ENCODE measurements at regions of chr3 and their contacts with region 1.

Region 1: GRCh38 chr3:188154014-188154808 is at the start of gene LPP:
- DNase-seq: peak; percentile 94
- ATAC-seq: peak; percentile 87
- H3K4me3 ChIP-seq: peak within 1 kb of the TSS; percentile 80 to 97 (median 93)
- H3K4me3 Mint-ChIP-seq: peak within 1 kb of the TSS; percentile 95
- H3K27ac ChIP-seq: peak within 1 kb of the TSS; percentile 88 to 91
- H3K27ac Mint-ChIP-seq: peak within 1 kb of the TSS; percentile 95
- H3K4me1 ChIP-seq: peaks cover 18 to 27% of the 10 kb centered on the region in 2 donors
- H3K4me1 Mint-ChIP-seq: peaks cover 51% of the 10 kb centered on the region
- H3K27me3 ChIP-seq: no peaks in the 10 kb centered on the region
- H3K27me3 Mint-ChIP-seq: no peaks in the 10 kb centered on the region
- CTCF ChIP-seq: peak; percentile 19
- total RNA-seq, gene LPP: 81.7 and 94.5 TPM in 2 replicates

Region 2: GRCh38 chr3:187919048-187919447 is 235.2 kb before region 1 on chr3:
- CTCF ChIA-PET with region 1: no interaction called
- POLR2A ChIA-PET with region 1: no interaction called
- intact Hi-C with region 1: loop called (anchors 5 kb)
- DNase-seq: peak; percentile 77
- ATAC-seq: peak; percentile 86
- H3K4me3 ChIP-seq: peak overlapping the region; percentile 11 to 62 (median 44)
- H3K4me3 Mint-ChIP-seq: peak overlapping the region; percentile 90
- H3K27ac ChIP-seq: peak overlapping the region; percentile 45 to 61
- H3K27ac Mint-ChIP-seq: peak overlapping the region; percentile 87
- H3K4me1 ChIP-seq: peaks cover 20 to 22% of the 10 kb centered on the region in 2 donors
- H3K4me1 Mint-ChIP-seq: peaks cover 31% of the 10 kb centered on the region
- H3K27me3 ChIP-seq: peaks cover 0 to 9% (median 2%) of the 10 kb centered on the region in 4 experiments
- H3K27me3 Mint-ChIP-seq: peaks cover 51% of the 10 kb centered on the region
- CTCF ChIP-seq: no peak

Region 3: GRCh38 chr3:188108703-188109412 is 45.4 kb before region 1 on chr3:
- CTCF ChIA-PET with region 1: no interaction called
- POLR2A ChIA-PET with region 1: no interaction called
- intact Hi-C with region 1: loop called (anchors 2 kb)
- DNase-seq: peak; percentile 62
- ATAC-seq: peak; percentile 92
- H3K4me3 ChIP-seq: no peak overlapping the region
- H3K4me3 Mint-ChIP-seq: peak overlapping the region; percentile 59
- H3K27ac ChIP-seq: peak overlapping the region in 1 of 2 donors; percentile 52
- H3K27ac Mint-ChIP-seq: peak overlapping the region; percentile 87
- H3K4me1 ChIP-seq: peaks cover 19 to 29% of the 10 kb centered on the region in 2 donors
- H3K4me1 Mint-ChIP-seq: peaks cover 31% of the 10 kb centered on the region
- H3K27me3 ChIP-seq: no peaks in the 10 kb centered on the region
- H3K27me3 Mint-ChIP-seq: no peaks in the 10 kb centered on the region
- CTCF ChIP-seq: no peak

Region 4: GRCh38 chr3:188212308-188212969 is 58.2 kb after region 1 on chr3:
- CTCF ChIA-PET with region 1: interaction called, 3 read pairs
- POLR2A ChIA-PET with region 1: interaction called, 3 read pairs
- intact Hi-C with region 1: loop called (anchors 5 kb)
- DNase-seq: no peak
- ATAC-seq: no peak
- H3K4me3 ChIP-seq: no peak overlapping the region
- H3K4me3 Mint-ChIP-seq: no peak overlapping the region
- H3K27ac ChIP-seq: no peak overlapping the region
- H3K27ac Mint-ChIP-seq: peak overlapping the region; percentile 59
- H3K4me1 ChIP-seq: peaks cover 29 to 31% of the 10 kb centered on the region in 2 donors
- H3K4me1 Mint-ChIP-seq: peaks cover 40% of the 10 kb centered on the region
- H3K27me3 ChIP-seq: no peaks in the 10 kb centered on the region
- H3K27me3 Mint-ChIP-seq: no peaks in the 10 kb centered on the region
- CTCF ChIP-seq: no peak

Region 5: GRCh38 chr3:188389711-188390342 is 235.6 kb after region 1 on chr3:
- CTCF ChIA-PET with region 1: no interaction called
- POLR2A ChIA-PET with region 1: no interaction called
- intact Hi-C with region 1: loop called (anchors 1 kb)
- DNase-seq: peak; percentile 86
- ATAC-seq: peak; percentile 88
- H3K4me3 ChIP-seq: peak overlapping the region in 1 of 5 experiments; percentile 42
- H3K4me3 Mint-ChIP-seq: peak overlapping the region; percentile 82
- H3K27ac ChIP-seq: peak overlapping the region; percentile 94 to 96
- H3K27ac Mint-ChIP-seq: peak overlapping the region; percentile 99
- H3K4me1 ChIP-seq: peaks cover 55 to 75% of the 10 kb centered on the region in 2 donors
- H3K4me1 Mint-ChIP-seq: peaks cover 80% of the 10 kb centered on the region
- H3K27me3 ChIP-seq: no peaks in the 10 kb centered on the region
- H3K27me3 Mint-ChIP-seq: no peaks in the 10 kb centered on the region
- CTCF ChIP-seq: no peak

Region 6: GRCh38 chr3:188432802-188433520 is 278.8 kb after region 1 on chr3:
- CTCF ChIA-PET with region 1: no interaction called
- POLR2A ChIA-PET with region 1: no interaction called
- intact Hi-C with region 1: loop called (anchors 5 kb)
- DNase-seq: peak; percentile 75
- ATAC-seq: peak; percentile 85
- H3K4me3 ChIP-seq: peak overlapping the region in 2 of 5 experiments; percentile 25 to 39
- H3K4me3 Mint-ChIP-seq: peak overlapping the region; percentile 81
- H3K27ac ChIP-seq: peak overlapping the region; percentile 95 to 99
- H3K27ac Mint-ChIP-seq: peak overlapping the region; percentile 98
- H3K4me1 ChIP-seq: peaks cover 57 to 83% of the 10 kb centered on the region in 2 donors
- H3K4me1 Mint-ChIP-seq: peaks cover 81% of the 10 kb centered on the region
- H3K27me3 ChIP-seq: no peaks in the 10 kb centered on the region
- H3K27me3 Mint-ChIP-seq: no peaks in the 10 kb centered on the region
- CTCF ChIP-seq: no peak